ENCODE measurements at regions of chr14 and their contacts with region 1.

Region 1: DNA sequence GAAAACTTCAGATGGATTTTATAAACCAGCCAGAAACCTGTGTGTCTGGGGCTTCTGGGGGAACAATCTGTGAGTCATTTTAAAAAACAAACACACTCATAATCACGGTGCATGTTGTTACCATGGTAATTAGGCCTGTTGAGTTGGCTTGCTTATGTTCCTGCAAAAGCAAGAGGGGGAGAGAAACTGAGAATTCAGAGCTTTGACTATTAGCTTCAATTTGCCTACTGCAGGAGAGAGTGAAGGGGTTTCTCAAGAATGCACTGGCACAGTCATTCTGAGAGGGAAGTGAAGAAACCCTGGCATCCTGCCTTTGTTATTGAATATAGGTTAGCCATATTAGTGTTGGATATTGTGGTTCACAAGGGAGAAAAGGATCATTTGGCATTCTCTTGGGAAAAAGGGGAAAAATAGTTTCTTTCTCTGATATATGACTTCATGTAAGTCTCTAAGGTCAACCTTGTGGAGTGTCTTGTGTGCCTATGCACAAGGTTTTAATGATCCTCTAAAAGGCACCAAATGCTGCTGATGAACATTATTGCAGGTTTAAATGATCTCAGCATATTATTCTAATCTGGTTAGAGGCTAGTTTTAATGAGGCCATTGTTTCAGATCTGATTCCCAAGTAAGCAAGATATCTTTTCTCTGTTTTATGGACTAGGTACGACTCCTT is 12.9 kb downstream of the GNG2 start:
- DNase-seq: peak; percentile 85 to 97 (median 94)
- H3K4me3 ChIP-seq: peak overlapping the region in 1 of 3 experiments; percentile 15
- H3K4me3 Mint-ChIP-seq: peak overlapping the region in 1 of 2 donors; percentile 62
- H3K27ac ChIP-seq: peak overlapping the region; percentile 20 to 89
- H3K27ac Mint-ChIP-seq: peak overlapping the region; percentile 88 to 95 (median 92)
- H3K4me1 ChIP-seq: peaks cover 29 to 30% of the 10 kb centered on the region in 2 donors
- H3K4me1 Mint-ChIP-seq: peaks cover 51% of the 10 kb centered on the region
- H3K27me3 ChIP-seq: no peaks in the 10 kb centered on the region
- H3K27me3 Mint-ChIP-seq: peaks cover 0 to 1% (median 0%) of the 10 kb centered on the region in 3 donors
- CTCF ChIP-seq: no peak

Region 2: DNA sequence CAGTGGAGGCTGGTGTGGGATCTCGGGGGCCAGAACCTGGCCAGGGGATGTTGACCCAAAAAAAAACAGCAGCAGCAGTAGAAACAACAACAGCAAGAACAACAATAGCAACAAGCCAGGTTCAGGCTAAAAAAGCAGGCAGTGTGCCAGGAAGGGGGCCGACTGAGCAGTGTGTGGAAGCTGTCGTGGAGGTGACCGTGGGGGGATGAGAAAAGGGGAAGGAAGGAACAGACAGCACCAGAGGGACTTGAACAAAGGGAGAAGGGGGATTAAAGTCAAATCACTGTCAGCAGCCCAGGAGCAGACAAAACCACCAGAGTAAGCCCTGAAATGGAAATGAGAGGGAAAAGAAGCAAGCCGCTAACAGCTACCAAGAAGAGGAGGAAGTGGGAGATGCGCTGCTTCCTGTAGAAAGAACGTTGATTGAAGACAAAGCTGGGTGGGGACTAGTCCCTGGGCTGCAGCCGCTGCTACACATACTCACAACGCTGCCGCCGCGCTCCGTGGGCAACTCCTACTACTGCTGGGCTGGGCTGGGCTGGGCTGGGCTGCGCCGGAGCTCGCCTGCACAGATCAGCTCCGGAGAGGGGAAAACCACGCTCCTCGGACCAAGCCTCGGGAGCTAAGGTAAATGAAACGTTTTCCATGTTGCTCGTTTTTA is 13.1 kb before region 1 on chr14 and contains the start of gene GNG2:
- intact Hi-C with region 1: no loop called
- DNase-seq: peak; percentile 78 to 87 (median 86)
- H3K4me3 ChIP-seq: peak within 1 kb of the TSS; percentile 79 to 95 (median 82)
- H3K4me3 Mint-ChIP-seq: peak within 1 kb of the TSS; percentile 96 to 97
- H3K27ac ChIP-seq: peak within 1 kb of the TSS; percentile 88 to 92
- H3K27ac Mint-ChIP-seq: peak within 1 kb of the TSS; percentile 93 to 97 (median 95)
- H3K4me1 ChIP-seq: peaks cover 56 to 78% of the 10 kb centered on the region in 2 donors
- H3K4me1 Mint-ChIP-seq: peaks cover 82% of the 10 kb centered on the region
- H3K27me3 ChIP-seq: no peaks in the 10 kb centered on the region
- H3K27me3 Mint-ChIP-seq: peaks cover 0 to 2% (median 0%) of the 10 kb centered on the region in 3 donors
- CTCF ChIP-seq: no peak
- polyA plus RNA-seq, gene GNG2: 42.7 to 151 (median 146) TPM

Region 3: DNA sequence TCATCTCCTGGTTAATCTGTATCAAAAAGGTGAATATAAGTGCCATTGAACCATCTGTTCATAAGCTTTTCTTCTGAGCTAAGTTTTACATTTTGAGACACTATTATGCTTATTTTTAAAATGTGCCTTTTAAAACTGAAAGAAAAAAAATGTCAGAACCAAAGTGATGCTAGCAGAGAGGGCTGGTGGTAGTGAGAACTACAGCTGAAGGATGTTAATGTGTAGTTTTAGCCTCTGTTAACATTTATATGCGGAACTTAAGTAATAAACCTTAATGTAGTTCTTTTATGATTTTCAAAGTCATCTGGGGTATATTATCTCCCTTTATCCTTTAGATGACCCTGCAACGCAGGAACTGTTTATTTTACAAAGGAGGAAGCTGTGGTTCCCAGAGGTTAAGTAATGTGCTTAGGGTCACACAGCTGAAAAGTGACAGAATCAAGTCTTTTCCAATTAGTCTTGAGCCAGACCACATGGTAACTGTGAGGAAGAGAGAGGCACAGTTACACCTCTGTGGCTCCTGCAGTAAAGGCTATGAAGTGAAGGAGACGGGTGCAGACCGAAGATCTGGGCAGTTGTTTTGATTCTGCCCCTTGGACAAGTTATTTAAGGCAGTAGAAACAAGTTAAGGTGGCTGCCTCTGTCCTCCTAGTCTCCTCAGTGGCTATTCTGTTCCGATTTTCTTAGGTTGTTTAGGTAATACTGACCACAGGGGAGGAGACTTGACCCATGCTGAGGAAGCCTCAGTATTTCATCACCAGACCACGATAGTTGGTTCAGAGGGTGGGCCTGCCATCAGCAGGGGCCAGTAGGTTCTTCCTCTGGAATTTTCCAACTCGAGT is 10.9 kb after region 1 on chr14:
- intact Hi-C with region 1: loop called in 1 of 2 experiments (anchors 1 kb)
- DNase-seq: peak; percentile 84 to 87 (median 86)
- H3K4me3 ChIP-seq: peak overlapping the region in 2 of 3 experiments; percentile 41 to 59
- H3K4me3 Mint-ChIP-seq: peak overlapping the region; percentile 56 to 91
- H3K27ac ChIP-seq: peak overlapping the region; percentile 65 to 84
- H3K27ac Mint-ChIP-seq: peak overlapping the region; percentile 94 to 99 (median 98)
- H3K4me1 ChIP-seq: peaks cover 54 to 58% of the 10 kb centered on the region in 2 donors
- H3K4me1 Mint-ChIP-seq: peaks cover 46% of the 10 kb centered on the region
- H3K27me3 ChIP-seq: no peaks in the 10 kb centered on the region
- H3K27me3 Mint-ChIP-seq: no peaks in the 10 kb centered on the region
- CTCF ChIP-seq: no peak

Region 4: GRCh38 chr14:51895375-51895774 is 22.0 kb after region 1 on chr14:
- intact Hi-C with region 1: no loop called
- DNase-seq: no peak
- H3K4me3 ChIP-seq: no peak overlapping the region
- H3K4me3 Mint-ChIP-seq: no peak overlapping the region
- H3K27ac ChIP-seq: no peak overlapping the region
- H3K27ac Mint-ChIP-seq: no peak overlapping the region
- H3K4me1 ChIP-seq: no peaks in the 10 kb centered on the region
- H3K4me1 Mint-ChIP-seq: peaks cover 12% of the 10 kb centered on the region
- H3K27me3 ChIP-seq: no peaks in the 10 kb centered on the region
- H3K27me3 Mint-ChIP-seq: no peaks in the 10 kb centered on the region
- CTCF ChIP-seq: no peak